ENCODE measurements at regions of chr17 and their contacts with region 1.

Region 1: DNA sequence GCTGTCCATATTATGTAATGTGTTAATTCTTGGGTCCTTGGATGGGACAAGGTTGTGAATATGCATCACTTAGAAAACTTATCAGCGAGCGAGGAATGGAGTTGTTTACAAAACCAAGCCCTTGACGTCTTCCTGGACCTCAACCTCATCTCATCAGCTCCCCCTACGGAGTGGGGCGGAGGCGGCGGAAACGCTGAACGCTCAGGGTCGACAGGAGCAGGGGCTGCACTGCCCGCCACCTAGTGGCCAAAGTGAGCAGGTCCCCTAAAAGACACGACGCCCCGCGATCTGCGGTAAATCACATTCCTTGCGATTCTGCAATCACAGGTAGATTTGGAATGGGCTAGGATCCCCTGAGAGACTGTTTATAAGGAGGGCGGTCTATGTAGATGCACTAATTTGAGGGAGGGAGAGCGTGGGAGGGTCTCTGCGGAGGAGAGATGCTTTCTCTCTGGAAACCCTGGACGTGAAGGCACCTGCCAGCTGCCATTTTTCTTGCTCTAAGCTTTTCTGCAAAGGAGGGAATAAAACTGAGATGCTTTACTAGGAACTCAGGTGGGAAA is 5.4 kb upstream of the ICAM2 start:
- DNase-seq: peak; percentile 95
- H3K4me3 Mint-ChIP-seq: peak overlapping the region; percentile 81
- H3K27ac Mint-ChIP-seq: peak overlapping the region; percentile 98
- H3K4me1 Mint-ChIP-seq: peaks cover 67% of the 10 kb centered on the region
- H3K27me3 Mint-ChIP-seq: no peaks in the 10 kb centered on the region

Region 2: DNA sequence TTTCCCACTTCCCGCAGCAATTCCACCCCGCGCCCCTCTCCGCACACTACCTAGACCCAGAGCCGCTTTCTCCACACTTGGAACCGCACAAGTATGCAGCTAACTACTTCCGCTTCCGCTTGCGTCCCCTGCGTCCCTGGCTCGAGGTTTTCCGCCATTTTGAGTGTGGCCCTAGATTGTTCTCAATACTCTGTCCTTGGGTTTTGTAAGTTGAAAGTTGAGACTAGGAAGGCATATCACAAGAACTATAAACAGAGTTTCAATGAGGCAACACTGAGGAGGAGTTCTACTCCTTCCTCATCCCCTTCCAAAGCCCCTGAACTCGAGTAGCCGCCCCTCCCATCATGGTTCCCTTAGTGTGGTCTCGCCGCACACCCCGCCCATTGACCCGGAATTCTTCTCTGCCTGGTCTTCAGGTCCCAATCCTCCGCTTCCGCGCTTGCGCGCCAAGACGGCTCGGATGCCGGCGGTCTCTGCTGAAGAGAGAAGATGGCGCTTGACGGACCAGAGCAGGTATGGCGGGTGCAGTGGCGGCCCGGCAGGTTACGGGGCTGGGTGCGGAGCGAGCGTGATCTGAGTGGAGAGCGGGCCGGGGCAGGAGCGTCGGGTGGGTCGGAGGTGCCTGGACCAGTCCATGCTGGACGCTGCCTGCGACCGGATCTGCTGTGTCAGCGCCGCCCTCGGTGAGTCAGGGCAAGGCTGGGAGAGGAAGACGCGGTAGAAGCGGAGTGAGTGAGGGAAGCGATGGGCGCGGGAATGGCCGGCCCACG is 198.6 kb before region 1 on chr17 and contains the starts of genes FTSJ3 and PSMC5:
- CTCF ChIA-PET with region 1: no interaction called
- POLR2A ChIA-PET with region 1: no interaction called
- intact Hi-C with region 1: no loop called
- DNase-seq: peak; percentile 97
- H3K4me3 Mint-ChIP-seq: peak within 1 kb of the TSS; percentile 94
- H3K27ac Mint-ChIP-seq: peak within 1 kb of the TSS; percentile 98
- H3K4me1 Mint-ChIP-seq: peaks cover 75% of the 10 kb centered on the region
- H3K27me3 Mint-ChIP-seq: no peaks in the 10 kb centered on the region
- total RNA-seq, gene FTSJ3: 41.5 to 42.8 TPM
- total RNA-seq, gene PSMC5: 165 to 171 TPM

Region 3: GRCh38 chr17:63911657-63912426 is 114.0 kb before region 1 on chr17:
- CTCF ChIA-PET with region 1: interaction called, 94 read pairs
- POLR2A ChIA-PET with region 1: no interaction called
- intact Hi-C with region 1: no loop called
- DNase-seq: peak; percentile 77
- H3K4me3 Mint-ChIP-seq: no peak overlapping the region
- H3K27ac Mint-ChIP-seq: no peak overlapping the region
- H3K4me1 Mint-ChIP-seq: no peaks in the 10 kb centered on the region
- H3K27me3 Mint-ChIP-seq: no peaks in the 10 kb centered on the region

Region 4: DNA sequence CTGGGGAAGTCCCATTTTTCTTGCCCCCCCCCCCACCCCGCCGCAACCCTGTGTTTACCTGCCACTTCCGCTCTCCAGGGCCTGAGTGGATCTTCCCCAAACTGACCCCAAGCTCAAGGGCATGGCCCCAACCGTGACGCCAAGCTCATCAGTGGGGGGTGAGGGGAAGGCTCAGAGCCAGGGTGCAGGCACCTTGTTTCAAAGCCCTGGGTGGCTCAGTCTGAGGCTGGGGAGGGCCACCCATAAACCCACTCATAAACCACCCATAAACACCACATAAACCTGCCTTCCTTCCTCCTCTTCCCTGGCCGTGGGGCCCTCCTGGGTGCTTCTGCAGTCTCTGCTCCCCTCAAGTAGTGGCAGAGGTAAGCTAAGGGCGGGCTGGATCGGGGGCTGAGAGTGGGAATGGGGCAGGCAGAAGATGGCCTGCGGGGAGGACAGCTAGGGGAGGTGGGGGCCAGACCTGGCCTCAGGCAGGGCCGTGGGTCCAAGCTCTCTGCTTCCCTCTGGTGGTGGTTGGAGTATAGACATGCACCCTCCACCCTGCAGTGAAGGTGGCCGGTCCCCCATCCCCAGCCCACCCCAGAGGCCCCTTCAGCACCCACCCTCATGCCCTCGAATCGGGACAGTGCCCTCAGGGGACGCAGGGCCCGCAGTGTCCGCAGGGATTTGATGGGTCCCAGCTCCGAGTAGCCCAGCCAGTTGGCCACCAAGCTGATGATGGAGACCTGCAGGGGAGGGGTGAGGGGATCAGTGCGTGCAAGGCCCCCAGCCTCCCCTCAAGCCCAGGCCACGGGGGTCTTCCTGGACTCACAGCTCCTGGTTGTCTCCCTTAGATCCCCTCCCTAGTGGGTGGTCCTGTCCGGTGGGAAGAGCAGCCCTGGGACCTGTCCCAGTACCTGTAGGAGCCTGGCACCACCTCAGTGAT is 79.1 kb before region 1 on chr17:
- CTCF ChIA-PET with region 1: interaction called, 47 read pairs
- POLR2A ChIA-PET with region 1: interaction called, 7 read pairs
- intact Hi-C with region 1: no loop called
- DNase-seq: peak; percentile 77
- H3K4me3 Mint-ChIP-seq: peak overlapping the region; percentile 53
- H3K27ac Mint-ChIP-seq: peak overlapping the region; percentile 75
- H3K4me1 Mint-ChIP-seq: peaks cover 14% of the 10 kb centered on the region
- H3K27me3 Mint-ChIP-seq: no peaks in the 10 kb centered on the region

Region 5: GRCh38 chr17:64041912-64042311 is 16.1 kb after region 1 on chr17:
- CTCF ChIA-PET with region 1: interaction called, 31 read pairs
- POLR2A ChIA-PET with region 1: no interaction called
- intact Hi-C with region 1: no loop called
- DNase-seq: no peak
- H3K4me3 Mint-ChIP-seq: no peak overlapping the region
- H3K27ac Mint-ChIP-seq: peak overlapping the region; percentile 47
- H3K4me1 Mint-ChIP-seq: peaks cover 10% of the 10 kb centered on the region
- H3K27me3 Mint-ChIP-seq: no peaks in the 10 kb centered on the region

Region 6: DNA sequence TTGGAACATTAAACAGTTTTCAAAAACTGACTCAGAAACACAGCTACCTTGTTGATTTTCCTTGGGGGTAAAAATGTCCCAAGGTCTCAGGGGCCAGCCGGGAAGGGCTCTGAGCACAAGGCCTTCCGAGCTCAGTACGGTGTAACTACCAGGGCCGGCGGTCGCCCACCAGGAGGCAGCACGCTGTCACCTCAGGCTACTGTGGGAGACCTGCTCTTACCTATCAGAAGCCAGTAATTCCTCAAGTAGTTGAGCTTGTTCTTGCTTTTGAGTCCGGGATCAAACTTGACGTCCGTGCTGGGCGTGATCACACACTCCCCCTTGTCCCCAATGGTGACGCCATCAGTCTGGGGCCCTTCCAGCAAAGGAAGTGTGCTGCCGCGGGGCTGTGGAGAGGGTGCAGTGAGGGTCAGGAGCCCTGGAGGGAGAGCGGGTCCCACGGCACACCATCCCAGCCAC is 38.0 kb after region 1 on chr17:
- CTCF ChIA-PET with region 1: interaction called, 30 read pairs
- POLR2A ChIA-PET with region 1: interaction called, 15 read pairs
- intact Hi-C with region 1: loop called (anchors 1 kb)
- DNase-seq: peak; percentile 74
- H3K4me3 Mint-ChIP-seq: peak overlapping the region; percentile 64
- H3K27ac Mint-ChIP-seq: peak overlapping the region; percentile 93
- H3K4me1 Mint-ChIP-seq: peaks cover 88% of the 10 kb centered on the region
- H3K27me3 Mint-ChIP-seq: no peaks in the 10 kb centered on the region

Region 7: GRCh38 chr17:64145757-64146417 is 120.1 kb after region 1 on chr17:
- CTCF ChIA-PET with region 1: interaction called, 11 read pairs
- POLR2A ChIA-PET with region 1: interaction called, 20 read pairs
- intact Hi-C with region 1: loop called (anchors 1 kb)
- DNase-seq: peak; percentile 96
- H3K4me3 Mint-ChIP-seq: no peak overlapping the region
- H3K27ac Mint-ChIP-seq: no peak overlapping the region
- H3K4me1 Mint-ChIP-seq: peaks cover 23% of the 10 kb centered on the region
- H3K27me3 Mint-ChIP-seq: no peaks in the 10 kb centered on the region